Testis (tissue), 5 donors: ENCODE measurements at regions of chr4 and their contacts with region 1.

Region 1: DNA sequence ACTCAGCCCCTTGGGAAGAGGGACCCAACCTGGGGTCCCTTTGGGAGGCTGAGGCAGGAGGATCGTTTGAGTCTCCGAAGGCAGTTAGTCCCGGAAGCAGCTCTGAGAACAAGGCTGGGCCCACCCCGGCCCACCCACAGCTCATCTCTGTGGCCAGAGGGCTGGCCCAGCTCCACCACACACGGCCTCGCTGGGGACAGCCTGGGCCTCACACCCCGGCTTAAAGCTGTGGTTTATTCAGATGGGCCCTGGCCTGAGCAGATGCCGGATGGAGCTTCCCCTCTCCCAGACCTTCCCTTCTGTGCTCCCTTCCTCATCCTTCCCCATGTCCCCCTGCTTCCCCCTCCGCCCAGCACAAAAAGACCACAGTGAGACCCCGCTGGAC is 54.4 kb downstream of the FAM53A start:
- DNase-seq: no peak
- H3K4me3 ChIP-seq: no peak overlapping the region
- H3K27ac ChIP-seq: no peak overlapping the region
- H3K4me1 ChIP-seq: no peaks in the 10 kb centered on the region
- H3K27me3 ChIP-seq: no peaks in the 10 kb centered on the region
- CTCF ChIP-seq: no peak
- POLR2A ChIP-seq: no peak

Region 2: DNA sequence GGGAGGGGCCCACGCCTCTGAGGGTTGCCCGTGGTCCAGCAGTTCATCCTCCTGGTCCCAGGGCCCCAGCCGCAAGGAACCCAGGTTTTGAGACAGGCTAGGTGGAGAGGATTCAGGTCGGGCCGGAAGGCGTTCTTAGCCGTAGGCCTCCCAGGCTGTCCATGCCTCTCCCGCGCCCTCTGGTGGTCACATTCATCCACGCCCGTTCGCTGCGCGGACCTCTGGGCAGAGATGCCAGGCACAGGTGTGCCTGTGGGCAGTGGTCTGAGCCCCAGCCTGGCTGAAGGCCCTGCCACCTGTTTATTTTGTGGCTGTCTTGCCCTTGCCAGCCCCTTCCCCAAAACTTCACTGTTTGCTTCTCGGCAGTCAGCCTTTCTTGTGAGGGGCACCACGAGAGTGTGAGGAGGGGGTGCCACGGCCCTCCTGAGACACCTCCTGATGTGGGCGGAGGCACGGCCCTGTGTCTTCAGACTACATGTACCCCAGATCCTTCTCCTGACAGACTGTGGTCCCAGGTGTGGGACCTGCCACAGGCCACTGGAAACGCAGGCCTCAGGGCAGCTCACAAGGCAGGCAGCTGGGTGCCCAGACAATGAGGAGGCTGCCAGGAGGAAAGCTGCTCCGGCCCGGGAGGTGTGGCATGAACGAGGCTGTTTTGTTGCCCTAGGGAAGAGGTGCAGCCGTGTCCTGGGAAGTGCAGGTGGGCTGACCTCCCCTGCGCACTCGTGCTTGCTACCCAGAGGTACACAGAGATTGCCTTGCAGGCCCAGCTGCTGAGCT is 277.6 kb before region 1 on chr4:
- intact Hi-C with region 1: loop called (anchors 10 kb)
- DNase-seq: peak; percentile 88
- H3K4me3 ChIP-seq: no peak overlapping the region
- H3K27ac ChIP-seq: no peak overlapping the region
- H3K4me1 ChIP-seq: peaks cover 24% of the 10 kb centered on the region
- H3K27me3 ChIP-seq: no peaks in the 10 kb centered on the region
- CTCF ChIP-seq: peak; percentile 80 to 95 (median 80)
- POLR2A ChIP-seq: no peak

Region 3: GRCh38 chr4:1813915-1814314 is 184.2 kb after region 1 on chr4:
- intact Hi-C with region 1: no loop called
- DNase-seq: no peak
- H3K4me3 ChIP-seq: no peak overlapping the region
- H3K27ac ChIP-seq: no peak overlapping the region
- H3K4me1 ChIP-seq: no peaks in the 10 kb centered on the region
- H3K27me3 ChIP-seq: no peaks in the 10 kb centered on the region
- CTCF ChIP-seq: no peak
- POLR2A ChIP-seq: no peak